ENCODE measurements at regions of chr10 and their contacts with region 1.

Region 1: GRCh38 chr10:113967126-113967525 is 76.5 kb upstream of the ADRB1 start:
- DNase-seq: no peak
- ATAC-seq: no peak
- H3K4me3 ChIP-seq: no peak overlapping the region
- H3K4me3 Mint-ChIP-seq: no peak overlapping the region
- H3K27ac ChIP-seq: no peak overlapping the region
- H3K27ac Mint-ChIP-seq: no peak overlapping the region
- H3K4me1 ChIP-seq: peaks cover 4 to 35% of the 10 kb centered on the region in 2 experiments
- H3K4me1 Mint-ChIP-seq: peaks cover 4 to 18% (median 10%) of the 10 kb centered on the region in 3 donors
- H3K27me3 ChIP-seq: peaks cover 0 to 2% of the 10 kb centered on the region in 2 experiments
- H3K27me3 Mint-ChIP-seq: peaks cover 0 to 6% of the 10 kb centered on the region in 2 donors

Region 2: GRCh38 chr10:113908236-113908635 is 58.9 kb before region 1 on chr10:
- CTCF ChIA-PET with region 1: no interaction called
- POLR2A ChIA-PET with region 1: interaction called in 1 of 2 experiments, 10 read pairs
- DNase-seq: no peak
- ATAC-seq: no peak
- H3K4me3 ChIP-seq: no peak overlapping the region
- H3K4me3 Mint-ChIP-seq: no peak overlapping the region
- H3K27ac ChIP-seq: no peak overlapping the region
- H3K27ac Mint-ChIP-seq: no peak overlapping the region
- H3K4me1 ChIP-seq: no peaks in the 10 kb centered on the region
- H3K4me1 Mint-ChIP-seq: no peaks in the 10 kb centered on the region
- H3K27me3 ChIP-seq: no peaks in the 10 kb centered on the region
- H3K27me3 Mint-ChIP-seq: no peaks in the 10 kb centered on the region

Region 3: GRCh38 chr10:113953505-113954272 is 13.4 kb before region 1 on chr10:
- CTCF ChIA-PET with region 1: no interaction called
- POLR2A ChIA-PET with region 1: interaction called, 3 to 12 read pairs
- DNase-seq: peak in 1 of 35 experiments; percentile 34
- ATAC-seq: no peak
- H3K4me3 ChIP-seq: no peak overlapping the region
- H3K4me3 Mint-ChIP-seq: no peak overlapping the region
- H3K27ac ChIP-seq: no peak overlapping the region
- H3K27ac Mint-ChIP-seq: no peak overlapping the region
- H3K4me1 ChIP-seq: peaks cover 5 to 7% of the 10 kb centered on the region in 2 experiments
- H3K4me1 Mint-ChIP-seq: peaks cover 0 to 12% (median 6%) of the 10 kb centered on the region in 3 donors
- H3K27me3 ChIP-seq: peaks cover 0 to 9% of the 10 kb centered on the region in 2 experiments
- H3K27me3 Mint-ChIP-seq: peaks cover 4 to 5% of the 10 kb centered on the region in 2 donors